ENCODE measurements at regions of chr4 and their contacts with region 1.

Region 1: GRCh38 chr4:159169404-159170302 is 66.8 kb downstream of the RAPGEF2 start:
- DNase-seq: no peak
- H3K4me3 Mint-ChIP-seq: no peak overlapping the region
- H3K27ac Mint-ChIP-seq: no peak overlapping the region
- H3K4me1 Mint-ChIP-seq: peaks cover 68% of the 10 kb centered on the region
- H3K27me3 Mint-ChIP-seq: no peaks in the 10 kb centered on the region

Region 2: GRCh38 chr4:159137176-159137575 is 32.5 kb before region 1 on chr4:
- CTCF ChIA-PET with region 1: no interaction called
- intact Hi-C with region 1: loop called (anchors 5 kb)
- DNase-seq: no peak
- H3K4me3 Mint-ChIP-seq: no peak overlapping the region
- H3K27ac Mint-ChIP-seq: no peak overlapping the region
- H3K4me1 Mint-ChIP-seq: peaks cover 21% of the 10 kb centered on the region
- H3K27me3 Mint-ChIP-seq: no peaks in the 10 kb centered on the region

Region 3: GRCh38 chr4:159240687-159241086 is 71.0 kb after region 1 on chr4:
- CTCF ChIA-PET with region 1: no interaction called
- intact Hi-C with region 1: no loop called
- DNase-seq: no peak
- H3K4me3 Mint-ChIP-seq: no peak overlapping the region
- H3K27ac Mint-ChIP-seq: no peak overlapping the region
- H3K4me1 Mint-ChIP-seq: peaks cover 25% of the 10 kb centered on the region
- H3K27me3 Mint-ChIP-seq: no peaks in the 10 kb centered on the region